ENCODE measurements at regions of chr19 and their contacts with region 1.

Region 1: DNA sequence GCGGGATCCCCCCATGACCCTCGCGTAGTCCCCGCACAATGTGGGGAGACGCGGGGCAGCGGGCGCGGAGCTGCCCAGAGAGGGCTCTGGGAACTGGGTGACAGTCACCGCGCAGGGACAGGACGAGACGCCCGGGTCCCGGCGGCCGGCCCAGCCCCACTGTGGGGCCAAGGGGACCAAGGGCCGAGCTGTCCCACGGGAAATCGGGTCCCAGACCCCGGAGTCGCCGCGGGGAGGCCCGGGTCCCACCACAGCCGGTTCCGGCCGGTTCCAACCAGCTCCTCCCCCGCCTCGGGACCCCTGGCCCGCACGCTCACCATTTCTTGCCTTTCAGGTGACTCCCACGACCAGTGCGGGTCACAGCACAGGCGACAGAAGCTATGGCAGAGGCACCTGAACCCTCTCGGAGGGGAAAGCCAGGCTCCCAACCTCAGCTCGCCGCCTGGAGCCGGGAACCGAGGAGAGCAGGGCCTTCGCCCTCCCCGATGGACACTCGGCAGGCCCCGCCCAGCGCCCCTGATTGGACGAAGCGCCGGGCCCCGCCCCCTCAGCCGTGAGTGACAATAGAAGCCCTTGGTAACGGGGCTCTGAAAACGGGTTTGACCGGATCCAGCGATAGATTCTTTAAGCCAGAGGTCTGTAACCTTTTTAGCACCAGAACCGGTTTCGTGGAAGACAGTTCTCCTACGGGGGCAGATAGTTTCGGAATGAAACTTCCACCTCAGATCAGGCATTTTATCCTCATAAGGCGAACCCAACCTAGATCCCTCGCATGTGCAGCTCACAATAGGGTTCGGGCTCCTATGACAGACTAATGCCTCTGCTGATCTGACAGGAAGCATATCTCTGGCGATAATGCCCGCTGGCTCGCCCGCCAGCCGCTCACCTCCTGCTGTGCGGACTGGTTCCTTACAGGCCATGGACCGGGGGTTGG is at the start of gene ZNF433:
- H3K4me3 ChIP-seq: peak within 1 kb of the TSS; percentile 79
- H3K27ac ChIP-seq: no peak within 1 kb of the TSS
- H3K4me1 ChIP-seq: no peaks in the 10 kb centered on the region
- CTCF ChIP-seq: no peak

Region 2: DNA sequence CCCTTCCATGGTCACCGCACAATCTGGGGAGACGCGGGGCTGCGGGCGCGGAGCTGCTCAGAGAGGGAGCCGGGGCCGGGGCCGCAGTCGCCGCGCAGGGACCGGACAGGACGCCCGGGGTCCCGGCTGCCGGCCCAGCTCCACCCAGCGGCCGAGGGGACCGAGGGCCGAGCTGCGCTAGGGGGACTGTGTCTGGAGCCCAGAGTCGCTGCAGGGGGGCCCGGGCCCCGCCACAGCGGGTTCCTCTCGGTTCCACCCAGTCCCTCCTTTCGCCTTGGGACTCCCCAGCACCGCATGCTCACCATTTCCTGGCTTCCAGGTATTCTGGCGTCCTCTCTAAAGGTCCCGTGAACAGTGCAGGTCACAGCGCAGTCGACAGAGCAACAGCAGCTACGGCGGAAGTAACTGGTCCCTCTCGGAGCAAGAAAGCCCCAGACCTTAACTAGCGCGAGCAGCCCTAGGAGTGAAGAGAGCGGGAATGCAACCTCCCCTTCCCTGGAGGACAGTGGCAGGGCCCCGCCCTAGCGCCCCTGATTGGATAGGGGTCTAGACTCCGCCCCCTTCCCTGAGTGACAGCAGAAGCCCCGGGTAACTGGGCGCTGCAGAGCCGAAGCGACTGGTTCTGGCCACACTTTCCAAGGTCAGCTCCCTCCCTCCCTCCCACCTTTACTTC is 17.1 kb after region 1 on chr19 and contains the start of gene ZNF878:
- CTCF ChIA-PET with region 1: no interaction called
- POLR2A ChIA-PET with region 1: interaction called, 35 read pairs
- H3K4me3 ChIP-seq: peak within 1 kb of the TSS; percentile 61
- H3K27ac ChIP-seq: no peak within 1 kb of the TSS
- H3K4me1 ChIP-seq: no peaks in the 10 kb centered on the region
- CTCF ChIP-seq: no peak

Region 3: GRCh38 chr19:12111943-12112650 is 76.6 kb after region 1 on chr19:
- CTCF ChIA-PET with region 1: no interaction called
- POLR2A ChIA-PET with region 1: no interaction called
- H3K4me3 ChIP-seq: no peak overlapping the region
- H3K27ac ChIP-seq: no peak overlapping the region
- H3K4me1 ChIP-seq: no peaks in the 10 kb centered on the region
- CTCF ChIP-seq: no peak

Region 4: DNA sequence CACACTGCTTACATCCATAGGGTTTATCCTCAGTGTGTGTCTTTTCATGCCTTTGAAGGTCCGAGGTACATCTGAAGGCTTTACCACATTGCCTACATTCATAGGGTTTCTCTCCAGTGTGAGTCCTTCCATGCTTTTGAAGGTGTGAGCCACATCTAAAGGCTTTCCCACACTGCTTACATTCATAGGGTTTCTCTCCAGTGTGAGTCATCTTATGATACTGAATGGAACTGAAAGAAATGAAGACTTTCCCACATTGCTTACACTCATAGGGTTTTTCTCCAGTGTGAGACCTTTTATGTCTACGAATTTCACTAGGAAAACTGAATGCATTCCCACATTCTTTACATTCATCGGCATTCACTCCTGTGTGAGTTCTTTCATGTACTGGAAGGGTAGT is 97.6 kb after region 1 on chr19:
- CTCF ChIA-PET with region 1: no interaction called
- POLR2A ChIA-PET with region 1: no interaction called
- H3K4me3 ChIP-seq: no peak overlapping the region
- H3K27ac ChIP-seq: no peak overlapping the region
- H3K4me1 ChIP-seq: no peaks in the 10 kb centered on the region
- CTCF ChIP-seq: no peak